Heart right ventricle (tissue), 16 donors: ENCODE measurements at regions of chr12 and their contacts with region 1.

Region 1: GRCh38 chr12:110100315-110100970 is 23.7 kb upstream of the IFT81 start:
- DNase-seq: peak; percentile 34 to 70
- ATAC-seq: peak; percentile 60 to 82 (median 72)
- H3K4me3 ChIP-seq: no peak overlapping the region
- H3K27ac ChIP-seq: peak overlapping the region in 2 of 10 donors; percentile 18 to 39
- H3K4me1 ChIP-seq: peaks cover 0 to 17% (median 6%) of the 10 kb centered on the region in 9 donors
- H3K27me3 ChIP-seq: no peaks in the 10 kb centered on the region
- CTCF ChIP-seq: peak; percentile 84 to 95 (median 90)

Region 2: GRCh38 chr12:110079477-110080400 is 20.7 kb before region 1 on chr12:
- intact Hi-C with region 1: no loop called
- DNase-seq: peak; percentile 32 to 49
- ATAC-seq: peak; percentile 53 to 81 (median 77)
- H3K4me3 ChIP-seq: peak overlapping the region in 3 of 10 donors; percentile 4 to 32 (median 22)
- H3K27ac ChIP-seq: peak overlapping the region in 7 of 10 donors; percentile 17 to 83 (median 35)
- H3K4me1 ChIP-seq: peaks cover 0 to 16% (median 0%) of the 10 kb centered on the region in 9 donors
- H3K27me3 ChIP-seq: no peaks in the 10 kb centered on the region
- CTCF ChIP-seq: no peak

Region 3: GRCh38 chr12:110176745-110177144 is 76.3 kb after region 1 on chr12:
- intact Hi-C with region 1: loop called in 3 of 10 experiments (anchors 5 kb)
- DNase-seq: peak in 1 of 2 donors; percentile 21
- ATAC-seq: peak in 6 of 8 donors; percentile 47 to 88 (median 72)
- H3K4me3 ChIP-seq: no peak overlapping the region
- H3K27ac ChIP-seq: peak overlapping the region in 6 of 10 donors; percentile 2 to 65 (median 32)
- H3K4me1 ChIP-seq: peaks cover 0 to 29% (median 20%) of the 10 kb centered on the region in 9 donors
- H3K27me3 ChIP-seq: no peaks in the 10 kb centered on the region
- CTCF ChIP-seq: no peak

Region 4: DNA sequence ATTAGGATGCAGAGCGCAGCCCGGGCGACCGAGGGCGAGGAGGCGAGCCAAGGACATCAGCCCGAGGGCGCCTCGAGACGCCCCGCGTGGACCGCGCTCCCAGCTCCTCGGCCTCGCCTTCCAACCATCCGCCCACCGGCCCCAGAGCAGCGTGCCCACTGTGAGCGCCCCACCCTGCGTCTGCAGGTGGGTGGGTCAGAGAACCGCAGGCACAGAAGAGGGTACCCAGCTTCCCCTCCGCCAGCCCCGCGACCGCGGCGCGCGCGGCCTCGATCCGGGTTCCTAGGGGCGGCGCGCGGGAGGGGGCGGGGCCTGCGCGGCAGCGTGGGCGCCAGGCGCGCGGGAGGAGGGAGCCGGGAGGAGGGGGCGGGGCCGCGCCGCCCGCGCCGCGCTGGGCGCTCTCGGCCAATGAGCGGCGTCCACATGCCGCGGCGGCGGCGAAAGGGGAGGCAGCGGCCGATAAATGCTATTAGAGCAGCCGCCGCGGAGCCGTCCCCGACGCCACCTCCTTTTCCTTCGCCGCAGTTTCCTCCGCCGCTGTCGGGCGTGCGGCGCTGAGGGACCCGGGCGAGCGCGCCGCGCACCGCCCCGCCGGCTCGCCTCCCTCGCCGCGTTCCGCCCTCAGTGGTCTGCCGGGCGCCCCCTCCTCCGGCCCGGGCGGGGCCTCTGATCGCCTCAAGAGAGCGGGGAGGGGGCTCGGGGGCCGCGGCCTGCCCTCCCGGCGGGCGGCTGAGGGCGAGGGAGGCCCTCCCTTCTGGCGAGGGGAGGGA is 180.5 kb after region 1 on chr12 and contains the start of gene ATP2A2:
- intact Hi-C with region 1: loop called in 3 of 10 experiments (anchors 5 to 10 kb)
- DNase-seq: peak; percentile 88 to 92
- ATAC-seq: peak; percentile 88 to 96 (median 90)
- H3K4me3 ChIP-seq: peak within 1 kb of the TSS; percentile 76 to 96 (median 91)
- H3K27ac ChIP-seq: peak within 1 kb of the TSS; percentile 94 to 100 (median 99)
- H3K4me1 ChIP-seq: peaks cover 0 to 58% (median 47%) of the 10 kb centered on the region in 9 donors
- H3K27me3 ChIP-seq: no peaks in the 10 kb centered on the region
- CTCF ChIP-seq: no peak
- total RNA-seq, gene ATP2A2: 1,003 to 4,750 (median 1,632) TPM

Region 5: GRCh38 chr12:110338754-110339153 is 238.3 kb after region 1 on chr12:
- intact Hi-C with region 1: loop called in 3 of 10 experiments (anchors 5 to 10 kb)
- DNase-seq: no peak
- ATAC-seq: no peak
- H3K4me3 ChIP-seq: no peak overlapping the region
- H3K27ac ChIP-seq: peak overlapping the region in 3 of 10 donors; percentile 12 to 45 (median 38)
- H3K4me1 ChIP-seq: peaks cover 0 to 31% (median 9%) of the 10 kb centered on the region in 9 donors
- H3K27me3 ChIP-seq: no peaks in the 10 kb centered on the region
- CTCF ChIP-seq: peak in 1 of 9 donors; percentile 5

Region 6: DNA sequence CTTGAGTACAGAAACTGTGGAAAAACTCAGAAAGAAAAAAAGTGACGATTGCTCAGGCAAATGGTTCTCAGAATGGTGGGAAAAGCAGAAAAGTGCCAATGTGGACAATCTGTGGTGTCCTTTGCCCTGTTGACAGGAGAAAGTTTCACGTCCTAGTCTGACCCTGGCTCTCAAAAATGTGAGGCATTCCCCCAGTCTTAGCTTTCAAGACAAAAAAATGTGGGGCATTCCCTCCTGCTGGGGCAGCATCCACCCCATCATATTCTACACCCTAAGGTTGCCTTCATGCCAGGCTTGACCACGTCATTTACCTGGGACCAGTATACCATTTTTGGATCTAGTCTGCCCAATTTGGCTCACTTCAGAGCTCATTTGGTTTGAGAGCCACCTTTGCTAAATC is 323.8 kb after region 1 on chr12:
- intact Hi-C with region 1: loop called in 4 of 10 experiments (anchors 2 to 5 kb)
- DNase-seq: no peak
- ATAC-seq: no peak
- H3K4me3 ChIP-seq: no peak overlapping the region
- H3K27ac ChIP-seq: no peak overlapping the region
- H3K4me1 ChIP-seq: no peaks in the 10 kb centered on the region
- H3K27me3 ChIP-seq: no peaks in the 10 kb centered on the region
- CTCF ChIP-seq: no peak